ENCODE measurements at regions of chr1 and their contacts with region 1.

Region 1: DNA sequence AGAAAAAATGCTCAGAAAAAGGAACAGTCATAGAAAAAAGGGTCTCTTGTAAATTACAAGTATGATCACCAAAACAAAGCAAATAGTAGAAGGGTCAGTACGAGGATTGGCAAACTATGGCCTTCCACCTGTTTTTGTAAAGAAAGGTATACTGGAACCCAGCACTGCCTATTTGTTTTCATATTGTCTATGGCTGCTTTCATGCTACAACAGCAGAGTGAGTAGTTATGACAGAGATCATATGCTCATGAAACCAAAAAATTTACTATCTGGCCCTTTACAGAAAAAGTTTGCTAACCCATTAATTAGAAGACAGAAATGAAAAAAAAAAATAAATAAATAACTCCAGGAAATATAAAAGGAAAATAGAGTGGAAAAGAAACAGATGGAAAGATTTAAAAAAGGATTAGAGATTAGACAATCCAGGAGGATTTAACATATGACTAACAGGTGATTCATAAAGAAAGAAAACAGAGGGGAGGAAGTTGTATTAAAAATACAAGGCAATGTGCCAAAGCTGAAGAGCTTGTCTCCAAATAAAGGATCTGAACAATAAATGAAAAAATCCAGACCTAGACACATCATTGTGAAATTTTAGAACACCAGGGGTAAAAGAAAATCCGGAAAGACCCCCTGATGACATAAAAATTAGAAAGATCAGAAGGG is 108.5 kb upstream of the SERTAD4 start:
- DNase-seq: no peak
- ATAC-seq: no peak
- H3K4me3 ChIP-seq: no peak overlapping the region
- H3K27ac ChIP-seq: no peak overlapping the region
- H3K4me1 ChIP-seq: no peaks in the 10 kb centered on the region
- H3K27me3 ChIP-seq: peaks cover 57% of the 10 kb centered on the region
- CTCF ChIP-seq: no peak
- POLR2A ChIP-seq: no peak
- RAD21 ChIP-seq: no peak

Region 2: DNA sequence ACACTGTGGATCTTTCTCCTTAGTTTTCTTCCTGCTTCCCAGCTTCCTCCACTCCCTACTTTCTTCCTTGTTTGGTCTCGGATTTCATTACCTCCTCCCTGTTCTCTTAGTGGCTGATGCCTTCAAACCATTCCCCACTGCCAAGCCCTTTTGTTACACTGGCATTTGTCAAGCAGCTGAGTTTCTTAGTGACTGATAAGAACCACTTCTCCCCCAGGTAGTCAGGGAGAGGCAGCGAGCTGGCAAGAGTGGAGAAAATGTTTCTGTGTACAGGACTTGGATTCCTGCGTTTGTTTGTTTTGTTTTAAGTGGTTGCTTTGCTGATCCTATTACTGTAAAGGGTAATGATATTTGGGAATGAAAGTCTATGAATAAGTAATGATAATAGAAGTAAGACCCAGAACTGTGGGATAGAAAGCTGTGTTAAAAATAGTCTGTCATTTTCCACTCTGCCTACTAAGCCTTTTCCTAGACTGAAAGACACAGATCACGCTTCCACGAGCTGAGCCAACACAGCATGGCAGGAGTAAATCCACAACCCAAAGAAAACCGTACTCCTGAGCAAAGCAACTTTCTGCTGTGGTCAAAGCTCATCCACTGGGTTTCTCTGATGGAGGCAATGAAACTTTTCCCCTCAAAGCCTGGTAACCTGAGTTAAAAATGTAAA is 98.4 kb after region 1 on chr1:
- CTCF ChIA-PET with region 1: no interaction called
- POLR2A ChIA-PET with region 1: no interaction called
- RAD21 ChIA-PET with region 1: interaction called in 1 of 2 experiments, 10 read pairs
- intact Hi-C with region 1: no loop called
- DNase-seq: no peak
- ATAC-seq: peak; percentile 58; the same call in 1 of the 2 replicates
- H3K4me3 ChIP-seq: no peak overlapping the region
- H3K27ac ChIP-seq: no peak overlapping the region
- H3K4me1 ChIP-seq: peaks cover 0 to 8% of the 10 kb centered on the region in 2 experiments; a peak in 1 of 4 replicates
- H3K27me3 ChIP-seq: peaks cover 17% of the 10 kb centered on the region
- CTCF ChIP-seq: no peak
- POLR2A ChIP-seq: no peak
- RAD21 ChIP-seq: no peak

Region 3: GRCh38 chr1:210233216-210234020 is 109.4 kb after region 1 on chr1:
- CTCF ChIA-PET with region 1: no interaction called
- POLR2A ChIA-PET with region 1: no interaction called
- RAD21 ChIA-PET with region 1: no interaction called
- intact Hi-C with region 1: no loop called
- DNase-seq: peak; percentile 4
- ATAC-seq: peak; percentile 72
- H3K4me3 ChIP-seq: peak overlapping the region; percentile 37 to 57
- H3K27ac ChIP-seq: no peak overlapping the region; the same call in 1 of the 2 replicates
- H3K4me1 ChIP-seq: peaks cover 7 to 21% of the 10 kb centered on the region in 2 experiments; a peak in 2 of 4 replicates
- H3K27me3 ChIP-seq: peaks cover 52% of the 10 kb centered on the region
- CTCF ChIP-seq: no peak
- POLR2A ChIP-seq: no peak
- RAD21 ChIP-seq: no peak